CD4-positive, alpha-beta memory T cell (primary cell): ENCODE measurements at regions of chr1 and their contacts with region 1.

Region 1: GRCh38 chr1:167043752-167044488 is 46.3 kb downstream of the GPA33 start:
- DNase-seq: peak; percentile 61 to 83 (median 72)
- H3K4me3 ChIP-seq: peak overlapping the region; percentile 1 to 33
- H3K4me3 Mint-ChIP-seq: peak overlapping the region; percentile 84 to 94 (median 88)
- H3K27ac ChIP-seq: peak overlapping the region; percentile 3
- H3K27ac Mint-ChIP-seq: peak overlapping the region; percentile 70 to 94 (median 80)
- H3K4me1 ChIP-seq: peaks cover 13% of the 10 kb centered on the region
- H3K4me1 Mint-ChIP-seq: peaks cover 4 to 18% (median 12%) of the 10 kb centered on the region in 4 donors
- H3K27me3 ChIP-seq: no peaks in the 10 kb centered on the region
- H3K27me3 Mint-ChIP-seq: peaks cover 4 to 7% of the 10 kb centered on the region in 2 donors

Region 2: DNA sequence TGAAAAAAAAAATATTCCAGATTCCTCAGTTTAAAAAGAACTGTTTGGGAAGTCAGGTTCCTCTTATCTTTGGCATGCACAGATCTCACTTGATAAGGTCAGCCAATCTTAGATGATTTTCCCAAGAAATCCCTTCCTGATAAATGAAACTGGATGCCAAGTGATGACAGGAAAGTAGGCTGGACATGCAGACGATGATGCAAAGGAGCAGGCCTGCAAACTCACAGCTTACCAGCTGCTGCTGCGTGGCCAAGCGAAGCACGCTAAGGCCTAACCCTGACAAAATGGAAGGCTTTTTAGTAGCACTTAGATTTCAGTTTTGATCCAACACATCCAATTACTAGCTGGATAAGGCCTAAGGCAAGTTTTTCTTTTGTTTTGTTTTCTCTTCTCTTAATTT is 178.0 kb before region 1 on chr1:
- CTCF ChIA-PET with region 1: no interaction called
- POLR2A ChIA-PET with region 1: no interaction called
- intact Hi-C with region 1: no loop called
- DNase-seq: no peak
- H3K4me3 ChIP-seq: no peak overlapping the region
- H3K4me3 Mint-ChIP-seq: no peak overlapping the region
- H3K27ac ChIP-seq: no peak overlapping the region
- H3K27ac Mint-ChIP-seq: no peak overlapping the region
- H3K4me1 ChIP-seq: no peaks in the 10 kb centered on the region
- H3K4me1 Mint-ChIP-seq: peaks cover 10 to 28% (median 21%) of the 10 kb centered on the region in 4 donors
- H3K27me3 ChIP-seq: no peaks in the 10 kb centered on the region
- H3K27me3 Mint-ChIP-seq: no peaks in the 10 kb centered on the region

Region 3: DNA sequence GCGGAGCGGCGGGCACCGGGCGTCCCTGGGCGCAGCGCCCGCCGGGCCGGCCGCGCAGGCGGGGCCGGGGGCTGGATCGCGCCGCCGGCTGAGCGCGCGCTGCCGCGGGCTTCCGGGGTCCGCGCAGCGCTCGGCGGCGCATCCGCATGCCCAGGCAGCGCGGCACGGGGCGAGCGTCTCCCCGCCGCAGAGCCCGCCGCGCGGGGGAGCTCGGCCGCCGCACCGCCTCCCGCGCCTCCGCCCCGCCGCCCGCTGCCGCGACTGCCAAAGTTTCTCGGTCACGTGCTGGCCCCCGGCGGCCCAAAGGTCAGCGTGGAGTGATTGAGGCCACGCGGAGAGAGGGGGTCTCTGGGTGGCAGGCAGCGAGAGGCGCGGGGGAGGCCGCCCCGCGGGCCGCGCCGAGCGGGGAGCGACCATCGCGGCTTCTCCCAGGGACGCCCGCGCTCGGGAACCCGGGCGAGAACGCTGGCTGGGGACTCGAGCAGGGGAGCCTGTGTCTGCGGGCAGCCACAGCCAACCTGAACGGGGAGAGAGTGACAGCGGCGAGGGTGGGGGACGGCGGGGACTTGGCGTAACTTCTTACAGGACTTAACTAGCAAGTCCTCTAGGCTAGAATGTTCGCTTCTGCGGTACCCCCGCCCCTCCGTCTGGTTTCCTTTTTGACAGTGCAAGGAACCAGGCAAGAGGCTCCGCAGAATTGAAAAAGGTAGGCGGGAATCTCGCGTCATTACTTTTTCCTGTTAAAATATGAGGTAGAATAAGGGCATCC is 68.4 kb before region 1 on chr1 and contains the start of gene ILDR2:
- CTCF ChIA-PET with region 1: no interaction called
- POLR2A ChIA-PET with region 1: no interaction called
- intact Hi-C with region 1: loop called (anchors 5 kb)
- DNase-seq: peak; percentile 31 to 72 (median 42)
- H3K4me3 ChIP-seq: peak within 1 kb of the TSS; percentile 28 to 59
- H3K4me3 Mint-ChIP-seq: peak within 1 kb of the TSS; percentile 81 to 96 (median 90)
- H3K27ac ChIP-seq: no peak within 1 kb of the TSS
- H3K27ac Mint-ChIP-seq: peak within 1 kb of the TSS; percentile 20 to 82 (median 73)
- H3K4me1 ChIP-seq: peaks cover 13% of the 10 kb centered on the region
- H3K4me1 Mint-ChIP-seq: peaks cover 13 to 26% (median 21%) of the 10 kb centered on the region in 4 donors
- H3K27me3 ChIP-seq: peaks cover 10% of the 10 kb centered on the region
- H3K27me3 Mint-ChIP-seq: peaks cover 14 to 23% of the 10 kb centered on the region in 2 donors
- total RNA-seq, gene ILDR2: 0.25 to 0.52 TPM

Region 4: GRCh38 chr1:167033646-167034045 is 10.3 kb before region 1 on chr1:
- CTCF ChIA-PET with region 1: no interaction called
- POLR2A ChIA-PET with region 1: no interaction called
- intact Hi-C with region 1: no loop called
- DNase-seq: no peak
- H3K4me3 ChIP-seq: no peak overlapping the region
- H3K4me3 Mint-ChIP-seq: no peak overlapping the region
- H3K27ac ChIP-seq: no peak overlapping the region
- H3K27ac Mint-ChIP-seq: no peak overlapping the region
- H3K4me1 ChIP-seq: no peaks in the 10 kb centered on the region
- H3K4me1 Mint-ChIP-seq: no peaks in the 10 kb centered on the region
- H3K27me3 ChIP-seq: no peaks in the 10 kb centered on the region
- H3K27me3 Mint-ChIP-seq: peaks cover 3 to 6% of the 10 kb centered on the region in 2 donors